ENCODE measurements at regions of chr2 and their contacts with region 1.

Region 1: GRCh38 chr2:112674229-112674628 is 28.5 kb downstream of the SLC20A1 start:
- DNase-seq: no peak
- H3K4me3 ChIP-seq: no peak overlapping the region
- H3K27me3 ChIP-seq: no peaks in the 10 kb centered on the region
- CTCF ChIP-seq: no peak

Region 2: GRCh38 chr2:112692496-112692911 is 18.3 kb after region 1 on chr2:
- CTCF ChIA-PET with region 1: interaction called, 3 read pairs
- POLR2A ChIA-PET with region 1: interaction called, 20 read pairs
- DNase-seq: peak; percentile 81
- H3K4me3 ChIP-seq: no peak overlapping the region
- H3K27me3 ChIP-seq: no peaks in the 10 kb centered on the region
- CTCF ChIP-seq: no peak

Measured in BJ (cell line).